Uterus (tissue), 4 donors: ENCODE measurements at regions of chr2 and their contacts with region 1.

Region 1: GRCh38 chr2:48530033-48530804 is at the start of gene STON1:
- DNase-seq: peak; percentile 72 to 74
- H3K4me3 ChIP-seq: peak within 1 kb of the TSS; percentile 92 to 96
- H3K27ac ChIP-seq: peak within 1 kb of the TSS; percentile 96 to 98
- H3K4me1 ChIP-seq: peaks cover 11 to 23% of the 10 kb centered on the region in 2 donors
- H3K27me3 ChIP-seq: no peaks in the 10 kb centered on the region
- CTCF ChIP-seq: peak in 2 of 4 experiments; percentile 24
- POLR2A ChIP-seq: peak in 1 of 2 donors; percentile 40
- total RNA-seq, gene STON1: 55.6 to 75.3 (median 65.8) TPM

Region 2: GRCh38 chr2:48471048-48471474 is 59.2 kb before region 1 on chr2:
- intact Hi-C with region 1: loop called (anchors 10 kb)
- DNase-seq: peak in 1 of 2 donors; percentile 40
- H3K4me3 ChIP-seq: no peak overlapping the region
- H3K27ac ChIP-seq: peak overlapping the region; percentile 64 to 73
- H3K4me1 ChIP-seq: peaks cover 8 to 12% of the 10 kb centered on the region in 2 donors
- H3K27me3 ChIP-seq: no peaks in the 10 kb centered on the region
- CTCF ChIP-seq: peak; percentile 68 to 86 (median 74)
- POLR2A ChIP-seq: no peak

Region 3: GRCh38 chr2:48624696-48625095 is 94.5 kb after region 1 on chr2:
- intact Hi-C with region 1: no loop called
- DNase-seq: no peak
- H3K4me3 ChIP-seq: no peak overlapping the region
- H3K27ac ChIP-seq: no peak overlapping the region
- H3K4me1 ChIP-seq: no peaks in the 10 kb centered on the region
- H3K27me3 ChIP-seq: no peaks in the 10 kb centered on the region
- CTCF ChIP-seq: no peak
- POLR2A ChIP-seq: no peak